Astrocyte of the cerebellum (primary cell): ENCODE measurements at regions of chr1 and their contacts with region 1.

Region 1: DNA sequence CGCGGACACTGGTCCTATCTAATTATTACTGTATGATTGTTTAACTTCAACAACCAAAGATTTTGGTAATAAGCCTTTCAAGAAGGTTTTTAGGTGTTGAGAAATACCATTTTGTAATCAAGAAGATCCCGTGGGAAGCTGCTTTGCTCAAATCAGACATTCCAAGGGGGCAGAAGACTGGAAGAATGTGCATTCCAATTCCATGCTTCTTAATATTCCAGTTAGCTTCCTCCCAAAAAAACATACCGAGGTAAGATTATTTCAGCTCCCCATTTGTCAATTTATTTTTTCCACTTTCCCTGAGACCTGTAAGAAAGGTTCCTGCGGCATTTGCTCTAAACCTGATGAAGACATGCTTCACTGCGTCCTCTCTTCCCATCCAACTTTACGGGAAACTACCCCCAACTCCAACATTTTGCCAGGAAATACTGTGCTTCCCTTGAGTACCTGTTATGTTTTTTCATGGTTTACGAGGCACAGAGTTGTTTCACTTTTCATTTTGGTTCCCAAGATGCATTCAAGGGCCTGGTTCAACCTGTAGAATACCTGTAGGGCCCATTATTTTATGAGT is 4.1 kb downstream of the CNN3 start:
- DNase-seq: peak; percentile 68
- H3K4me3 ChIP-seq: peak overlapping the region; percentile 96
- CTCF ChIP-seq: no peak

Region 2: GRCh38 chr1:95043141-95043980 is 120.5 kb after region 1 on chr1:
- in situ Hi-C with region 1: loop called (anchors 25 kb)
- DNase-seq: peak; percentile 78
- H3K4me3 ChIP-seq: no peak overlapping the region
- CTCF ChIP-seq: peak; percentile 99

Region 3: GRCh38 chr1:95233737-95234500 is 311.1 kb after region 1 on chr1 and contains the start of gene RWDD3:
- in situ Hi-C with region 1: loop called (anchors 25 kb)
- DNase-seq: peak; percentile 69
- H3K4me3 ChIP-seq: peak within 1 kb of the TSS; percentile 69
- CTCF ChIP-seq: peak; percentile 63